ENCODE measurements at regions of chr1 and their contacts with region 1.

Region 1: DNA sequence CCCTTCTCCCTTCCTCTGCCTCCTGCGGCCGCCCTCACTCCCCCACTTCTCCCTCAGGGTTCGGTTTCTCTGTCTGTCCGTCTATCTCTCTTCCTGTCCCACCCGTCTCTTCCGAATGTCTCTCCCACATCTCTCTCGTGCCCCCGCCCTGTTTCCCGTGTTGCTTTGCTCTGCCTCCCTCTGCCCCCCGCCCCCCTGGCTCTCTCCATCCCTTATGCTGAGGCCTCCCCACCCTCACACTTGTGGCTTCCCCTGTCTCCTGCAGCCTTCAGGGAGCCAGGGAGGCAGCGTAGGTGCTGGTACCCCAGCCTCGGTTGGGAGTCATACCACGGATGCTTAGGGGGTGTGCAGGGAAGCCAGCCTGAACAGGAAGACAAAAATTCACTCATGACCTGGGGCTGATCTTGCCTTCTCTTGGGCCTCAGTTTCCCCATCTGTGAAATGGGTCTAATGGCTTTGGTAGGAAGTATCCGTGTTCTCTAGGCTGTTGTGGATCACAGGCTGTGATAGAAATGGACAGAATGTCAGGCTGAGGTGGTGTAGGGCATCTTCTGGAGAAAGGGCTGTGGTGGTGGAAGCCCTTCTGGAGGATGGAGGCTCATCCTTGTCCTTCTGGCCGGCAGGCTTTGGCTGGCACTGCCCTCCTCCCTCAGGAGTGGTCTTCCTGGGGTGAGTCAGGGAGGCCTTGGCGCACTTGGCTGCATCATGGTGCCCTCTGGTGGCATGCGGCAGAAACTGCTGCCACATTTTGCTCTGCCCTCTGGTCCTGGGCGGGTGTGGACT is 55.5 kb downstream of the FOXO6 start:
- DNase-seq: peak; percentile 87
- H3K4me3 Mint-ChIP-seq: no peak overlapping the region
- H3K27ac Mint-ChIP-seq: no peak overlapping the region
- H3K4me1 Mint-ChIP-seq: peaks cover 2% of the 10 kb centered on the region
- H3K27me3 Mint-ChIP-seq: no peaks in the 10 kb centered on the region

Region 2: GRCh38 chr1:41268154-41268770 is 148.5 kb before region 1 on chr1:
- intact Hi-C with region 1: loop called (anchors 1 kb)
- DNase-seq: peak; percentile 89
- H3K4me3 Mint-ChIP-seq: no peak overlapping the region
- H3K27ac Mint-ChIP-seq: no peak overlapping the region
- H3K4me1 Mint-ChIP-seq: no peaks in the 10 kb centered on the region
- H3K27me3 Mint-ChIP-seq: peaks cover 16% of the 10 kb centered on the region

Region 3: GRCh38 chr1:41282679-41283317 is 133.9 kb before region 1 on chr1:
- intact Hi-C with region 1: loop called (anchors 5 kb)
- DNase-seq: peak; percentile 72
- H3K4me3 Mint-ChIP-seq: no peak overlapping the region
- H3K27ac Mint-ChIP-seq: no peak overlapping the region
- H3K4me1 Mint-ChIP-seq: peaks cover 2% of the 10 kb centered on the region
- H3K27me3 Mint-ChIP-seq: peaks cover 18% of the 10 kb centered on the region

Region 4: DNA sequence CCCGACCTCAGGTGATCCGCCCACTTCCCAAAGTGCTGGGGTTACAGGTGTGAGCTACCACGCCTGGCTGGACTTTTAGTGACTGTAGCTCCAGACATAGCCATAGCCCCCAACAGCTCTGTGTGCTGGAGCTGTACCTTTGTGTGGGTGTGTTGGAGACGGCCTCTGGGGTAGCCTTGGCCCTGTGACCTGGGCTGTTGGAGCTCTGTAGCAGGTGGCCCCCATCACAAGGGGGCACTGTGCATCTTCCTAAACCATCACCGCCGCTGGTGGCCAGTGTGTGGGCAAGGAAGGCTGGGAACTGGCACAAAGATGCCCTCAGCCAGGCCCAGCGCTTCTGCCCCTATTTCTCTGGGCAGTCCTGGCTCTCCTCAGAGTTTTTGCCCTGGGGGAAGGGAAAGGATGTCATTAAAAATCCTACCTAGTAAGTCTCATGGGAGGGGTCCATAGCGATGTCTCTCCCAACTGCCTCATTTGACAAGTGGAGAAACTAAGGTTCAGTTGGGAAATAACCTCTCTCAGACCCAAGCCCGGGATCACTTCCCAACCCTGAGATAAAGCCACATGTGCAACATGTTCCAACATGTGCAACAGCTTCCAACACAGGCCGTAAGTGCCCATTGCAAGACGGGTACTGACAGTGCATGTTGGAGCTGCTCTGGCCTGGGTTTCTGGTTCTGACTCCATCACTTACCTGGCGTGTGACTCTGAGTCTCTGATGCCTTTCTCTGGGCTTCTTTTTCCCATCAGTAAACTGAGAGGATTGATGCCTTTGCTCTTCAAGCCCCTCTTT is 93.7 kb before region 1 on chr1:
- intact Hi-C with region 1: loop called (anchors 1 kb)
- DNase-seq: peak; percentile 63
- H3K4me3 Mint-ChIP-seq: no peak overlapping the region
- H3K27ac Mint-ChIP-seq: no peak overlapping the region
- H3K4me1 Mint-ChIP-seq: no peaks in the 10 kb centered on the region
- H3K27me3 Mint-ChIP-seq: peaks cover 12% of the 10 kb centered on the region